Heart left ventricle (tissue), 16 donors: ENCODE measurements at regions of chrX and their contacts with region 1.

Region 1: GRCh38 chrX:39242187-39242586 is 440.9 kb downstream of the MID1IP1 start:
- DNase-seq: peak in 1 of 5 donors; percentile 5
- ATAC-seq: peak in 2 of 4 donors; percentile 41 to 42
- H3K4me3 ChIP-seq: no peak overlapping the region
- H3K27ac ChIP-seq: no peak overlapping the region
- H3K4me1 ChIP-seq: no peaks in the 10 kb centered on the region
- H3K27me3 ChIP-seq: peaks cover 0 to 27% (median 0%) of the 10 kb centered on the region in 9 donors
- CTCF ChIP-seq: peak in 11 of 12 donors; percentile 17 to 52 (median 29)
- POLR2A ChIP-seq: no peak

Region 2: DNA sequence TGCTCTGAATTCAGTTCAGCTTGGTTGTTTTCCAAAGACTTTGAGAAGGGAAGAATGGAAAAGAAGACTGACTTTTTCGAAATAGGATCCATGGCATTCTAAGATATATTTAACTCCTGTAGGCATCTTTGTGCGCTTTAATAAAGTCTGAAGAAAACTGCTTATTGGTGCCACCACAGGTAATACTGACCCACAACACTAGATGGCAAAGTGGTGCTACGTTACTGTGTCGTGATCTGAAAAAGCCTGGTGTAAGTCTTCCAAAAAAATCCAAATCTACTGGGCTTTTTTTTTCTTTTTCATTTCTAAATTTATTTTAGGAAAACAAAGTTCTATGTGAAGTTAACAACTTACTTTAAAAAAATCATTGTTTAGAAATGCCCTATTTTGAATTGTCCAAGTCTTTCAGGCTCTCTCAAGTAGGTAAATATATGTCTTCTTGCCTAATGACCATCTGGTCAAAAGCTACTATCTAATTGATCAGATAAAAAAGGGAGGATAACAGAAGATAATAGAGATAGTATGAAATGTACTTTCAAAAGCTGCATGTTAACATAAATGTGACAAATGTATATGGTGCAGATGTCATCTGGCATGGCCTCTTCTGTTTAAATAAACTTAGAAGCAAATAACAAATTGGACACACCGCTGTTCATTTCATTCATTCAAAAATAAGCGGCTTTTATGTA is 487.9 kb before region 1 on chrX:
- intact Hi-C with region 1: loop called in 3 of 10 experiments (anchors 10 kb)
- DNase-seq: no peak
- ATAC-seq: peak in 1 of 4 donors; percentile 63
- H3K4me3 ChIP-seq: no peak overlapping the region
- H3K27ac ChIP-seq: no peak overlapping the region
- H3K4me1 ChIP-seq: no peaks in the 10 kb centered on the region
- H3K27me3 ChIP-seq: peaks cover 0 to 21% (median 0%) of the 10 kb centered on the region in 9 donors
- CTCF ChIP-seq: peak; percentile 40 to 65 (median 55)
- POLR2A ChIP-seq: no peak

Region 3: GRCh38 chrX:38768079-38768478 is 474.1 kb before region 1 on chrX:
- intact Hi-C with region 1: loop called in 4 of 10 experiments (anchors 5 to 10 kb)
- DNase-seq: no peak
- ATAC-seq: no peak
- H3K4me3 ChIP-seq: no peak overlapping the region
- H3K27ac ChIP-seq: no peak overlapping the region
- H3K4me1 ChIP-seq: no peaks in the 10 kb centered on the region
- H3K27me3 ChIP-seq: peaks cover 0 to 10% (median 0%) of the 10 kb centered on the region in 9 donors
- CTCF ChIP-seq: peak in 11 of 12 donors; percentile 19 to 58 (median 34)
- POLR2A ChIP-seq: no peak